ENCODE measurements at regions of chr1 and their contacts with region 1.

Region 1: GRCh38 chr1:40315239-40315794 is 1.8 kb downstream of the COL9A2 start:
- DNase-seq: peak; percentile 71 to 92 (median 85)
- ATAC-seq: peak; percentile 81
- H3K4me3 ChIP-seq: peak overlapping the region; percentile 54 to 84
- H3K4me3 Mint-ChIP-seq: peak overlapping the region; percentile 84
- H3K27ac ChIP-seq: peak overlapping the region in 1 of 2 experiments; percentile 24
- H3K27ac Mint-ChIP-seq: peak overlapping the region; percentile 29
- H3K4me1 ChIP-seq: peaks cover 14% of the 10 kb centered on the region
- H3K4me1 Mint-ChIP-seq: peaks cover 27% of the 10 kb centered on the region
- H3K27me3 ChIP-seq: peaks cover 0 to 13% of the 10 kb centered on the region in 2 experiments
- H3K27me3 Mint-ChIP-seq: peaks cover 7% of the 10 kb centered on the region
- CTCF ChIP-seq: peak; percentile 95

Region 2: DNA sequence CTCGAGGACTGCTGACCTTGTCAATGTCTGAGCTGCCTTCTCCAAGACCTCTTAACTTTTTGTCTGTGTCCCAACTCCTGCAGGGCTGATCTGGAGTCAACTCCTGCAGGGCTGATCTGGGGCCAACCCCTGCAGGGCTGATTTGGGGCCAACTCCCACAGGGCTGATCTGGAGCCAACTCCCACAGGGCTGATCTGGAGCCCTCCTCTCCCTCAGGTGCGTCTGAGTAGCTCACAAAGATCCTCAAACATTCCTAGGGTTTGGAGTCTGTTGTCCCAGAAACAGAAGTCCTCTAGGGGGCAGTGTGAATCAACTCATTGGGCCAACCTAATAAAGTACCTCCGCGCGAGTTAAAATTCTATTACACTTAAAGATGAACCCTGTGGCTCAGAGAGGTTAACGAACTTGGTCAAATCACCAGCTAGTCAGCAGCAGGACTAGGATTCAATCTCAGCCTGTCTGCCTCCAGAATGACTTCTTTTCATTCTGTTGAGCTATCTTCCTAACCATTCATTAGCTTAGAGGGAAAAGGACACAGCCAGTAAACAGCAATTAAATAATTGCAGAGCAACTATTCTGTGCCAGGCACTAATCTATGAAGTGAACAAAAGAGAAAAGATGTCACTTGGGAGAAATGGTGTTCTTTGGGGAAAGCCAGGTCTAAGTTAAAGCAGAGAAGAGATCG is 171.3 kb before region 1 on chr1:
- CTCF ChIA-PET with region 1: interaction called, 12 read pairs
- POLR2A ChIA-PET with region 1: no interaction called
- intact Hi-C with region 1: no loop called
- DNase-seq: peak; percentile 10 to 82 (median 51)
- ATAC-seq: peak; percentile 74
- H3K4me3 ChIP-seq: no peak overlapping the region
- H3K4me3 Mint-ChIP-seq: no peak overlapping the region
- H3K27ac ChIP-seq: no peak overlapping the region
- H3K27ac Mint-ChIP-seq: no peak overlapping the region
- H3K4me1 ChIP-seq: peaks cover 3% of the 10 kb centered on the region
- H3K4me1 Mint-ChIP-seq: peaks cover 6% of the 10 kb centered on the region
- H3K27me3 ChIP-seq: no peaks in the 10 kb centered on the region
- H3K27me3 Mint-ChIP-seq: peaks cover 20% of the 10 kb centered on the region
- CTCF ChIP-seq: peak; percentile 73

Region 3: DNA sequence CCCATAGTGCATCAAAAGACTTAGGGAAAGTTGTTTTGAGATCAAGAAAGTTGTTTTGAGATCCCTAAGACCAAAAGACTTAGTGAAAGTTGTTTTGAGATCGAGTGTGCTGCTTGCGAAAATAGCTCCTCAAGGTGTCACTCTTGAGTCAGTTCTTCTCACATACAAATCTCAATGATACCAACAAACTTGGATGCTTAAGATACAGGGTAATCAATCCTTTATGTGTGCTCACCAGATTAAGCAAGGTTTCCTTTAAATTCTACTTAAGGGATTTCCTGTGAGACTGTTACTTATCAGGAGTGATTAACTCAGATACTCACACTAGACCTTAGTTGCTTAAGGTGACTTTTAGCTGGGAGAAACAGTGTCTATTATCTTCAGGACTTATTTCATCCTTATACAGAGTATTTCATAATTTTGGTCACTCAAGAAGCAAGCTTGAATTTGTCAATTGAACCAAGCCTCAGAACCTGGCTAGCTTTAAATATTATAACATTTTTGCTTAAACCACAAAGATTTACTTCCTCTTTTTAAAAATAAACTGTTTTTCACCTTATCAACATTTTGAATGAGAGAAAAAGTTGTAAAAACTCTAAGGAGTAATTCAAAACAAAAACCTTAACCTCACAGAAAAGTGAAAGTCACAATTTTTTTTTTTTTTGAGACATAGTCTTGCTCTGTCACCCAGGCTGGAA is 162.1 kb before region 1 on chr1:
- CTCF ChIA-PET with region 1: interaction called, 60 read pairs
- POLR2A ChIA-PET with region 1: interaction called, 9 read pairs
- intact Hi-C with region 1: no loop called
- DNase-seq: peak in 5 of 9 experiments; percentile 5 to 84 (median 37)
- ATAC-seq: peak; percentile 88
- H3K4me3 ChIP-seq: no peak overlapping the region
- H3K4me3 Mint-ChIP-seq: peak overlapping the region; percentile 20
- H3K27ac ChIP-seq: no peak overlapping the region
- H3K27ac Mint-ChIP-seq: peak overlapping the region; percentile 65
- H3K4me1 ChIP-seq: no peaks in the 10 kb centered on the region
- H3K4me1 Mint-ChIP-seq: peaks cover 9% of the 10 kb centered on the region
- H3K27me3 ChIP-seq: no peaks in the 10 kb centered on the region
- H3K27me3 Mint-ChIP-seq: no peaks in the 10 kb centered on the region
- CTCF ChIP-seq: peak; percentile 76

Region 4: DNA sequence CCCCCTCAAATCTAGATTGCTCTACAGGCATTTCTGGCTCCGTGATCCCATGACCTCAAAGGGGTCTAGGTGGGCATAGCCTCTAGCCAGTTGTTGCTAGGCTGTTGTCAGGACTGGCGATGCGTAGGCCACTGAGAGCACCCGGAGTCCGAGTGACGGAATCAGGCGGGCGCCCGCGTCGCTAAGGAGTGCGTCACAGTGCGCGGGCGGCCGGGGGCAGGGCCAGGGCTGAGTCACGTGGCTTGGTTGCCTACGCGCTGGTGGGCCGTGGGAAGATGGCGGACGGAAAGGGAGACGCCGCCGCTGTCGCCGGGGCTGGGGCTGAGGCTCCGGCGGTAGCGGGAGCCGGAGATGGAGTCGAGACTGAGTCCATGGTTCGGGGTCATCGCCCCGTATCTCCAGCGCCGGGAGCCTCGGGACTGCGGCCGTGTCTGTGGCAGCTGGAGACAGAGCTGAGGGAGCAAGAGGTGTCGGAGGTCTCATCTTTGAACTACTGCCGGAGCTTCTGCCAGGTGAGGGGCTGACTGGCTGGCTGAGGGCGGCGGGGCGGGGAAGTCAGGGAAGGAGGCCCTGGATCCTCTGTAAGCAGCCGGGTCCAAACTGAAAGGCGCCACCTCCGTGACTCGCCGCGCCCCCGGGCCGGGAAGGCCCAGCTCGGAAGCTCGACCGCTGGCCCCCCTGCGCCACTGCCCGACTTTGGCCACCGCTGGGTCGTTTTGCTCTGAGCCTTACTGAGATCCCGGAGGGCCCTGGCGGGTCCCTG is 154.0 kb before region 1 on chr1 and contains the start of gene RLF:
- CTCF ChIA-PET with region 1: no interaction called
- POLR2A ChIA-PET with region 1: interaction called, 4 read pairs
- intact Hi-C with region 1: loop called (anchors 1 to 5 kb)
- DNase-seq: peak; percentile 90 to 97 (median 94)
- ATAC-seq: peak; percentile 95
- H3K4me3 ChIP-seq: peak within 1 kb of the TSS; percentile 96 to 100
- H3K4me3 Mint-ChIP-seq: no peak within 1 kb of the TSS
- H3K27ac ChIP-seq: peak within 1 kb of the TSS; percentile 96 to 98
- H3K27ac Mint-ChIP-seq: no peak within 1 kb of the TSS
- H3K4me1 ChIP-seq: peaks cover 46% of the 10 kb centered on the region
- H3K4me1 Mint-ChIP-seq: peaks cover 22% of the 10 kb centered on the region
- H3K27me3 ChIP-seq: no peaks in the 10 kb centered on the region
- H3K27me3 Mint-ChIP-seq: no peaks in the 10 kb centered on the region
- CTCF ChIP-seq: no peak
- total RNA-seq, gene RLF: 62.2 to 62.6 TPM

Region 5: GRCh38 chr1:40257688-40258444 is 57.5 kb before region 1 on chr1 and contains the start of gene ZMPSTE24:
- CTCF ChIA-PET with region 1: interaction called, 3 read pairs
- POLR2A ChIA-PET with region 1: interaction called, 3 read pairs
- intact Hi-C with region 1: loop called (anchors 1 to 2 kb)
- DNase-seq: peak; percentile 92 to 99 (median 95)
- ATAC-seq: peak; percentile 95
- H3K4me3 ChIP-seq: peak within 1 kb of the TSS; percentile 95 to 98
- H3K4me3 Mint-ChIP-seq: peak within 1 kb of the TSS; percentile 98
- H3K27ac ChIP-seq: peak within 1 kb of the TSS; percentile 88 to 99
- H3K27ac Mint-ChIP-seq: peak within 1 kb of the TSS; percentile 100
- H3K4me1 ChIP-seq: peaks cover 20% of the 10 kb centered on the region
- H3K4me1 Mint-ChIP-seq: peaks cover 56% of the 10 kb centered on the region
- H3K27me3 ChIP-seq: no peaks in the 10 kb centered on the region
- H3K27me3 Mint-ChIP-seq: no peaks in the 10 kb centered on the region
- CTCF ChIP-seq: no peak
- total RNA-seq, gene ZMPSTE24: 11.5 to 12.2 TPM

Region 6: GRCh38 chr1:40273547-40274166 is 41.7 kb before region 1 on chr1:
- CTCF ChIA-PET with region 1: interaction called, 10 read pairs
- POLR2A ChIA-PET with region 1: no interaction called
- intact Hi-C with region 1: no loop called
- DNase-seq: no peak
- ATAC-seq: no peak
- H3K4me3 ChIP-seq: no peak overlapping the region
- H3K4me3 Mint-ChIP-seq: no peak overlapping the region
- H3K27ac ChIP-seq: no peak overlapping the region
- H3K27ac Mint-ChIP-seq: no peak overlapping the region
- H3K4me1 ChIP-seq: no peaks in the 10 kb centered on the region
- H3K4me1 Mint-ChIP-seq: no peaks in the 10 kb centered on the region
- H3K27me3 ChIP-seq: no peaks in the 10 kb centered on the region
- H3K27me3 Mint-ChIP-seq: no peaks in the 10 kb centered on the region
- CTCF ChIP-seq: no peak

Region 7: DNA sequence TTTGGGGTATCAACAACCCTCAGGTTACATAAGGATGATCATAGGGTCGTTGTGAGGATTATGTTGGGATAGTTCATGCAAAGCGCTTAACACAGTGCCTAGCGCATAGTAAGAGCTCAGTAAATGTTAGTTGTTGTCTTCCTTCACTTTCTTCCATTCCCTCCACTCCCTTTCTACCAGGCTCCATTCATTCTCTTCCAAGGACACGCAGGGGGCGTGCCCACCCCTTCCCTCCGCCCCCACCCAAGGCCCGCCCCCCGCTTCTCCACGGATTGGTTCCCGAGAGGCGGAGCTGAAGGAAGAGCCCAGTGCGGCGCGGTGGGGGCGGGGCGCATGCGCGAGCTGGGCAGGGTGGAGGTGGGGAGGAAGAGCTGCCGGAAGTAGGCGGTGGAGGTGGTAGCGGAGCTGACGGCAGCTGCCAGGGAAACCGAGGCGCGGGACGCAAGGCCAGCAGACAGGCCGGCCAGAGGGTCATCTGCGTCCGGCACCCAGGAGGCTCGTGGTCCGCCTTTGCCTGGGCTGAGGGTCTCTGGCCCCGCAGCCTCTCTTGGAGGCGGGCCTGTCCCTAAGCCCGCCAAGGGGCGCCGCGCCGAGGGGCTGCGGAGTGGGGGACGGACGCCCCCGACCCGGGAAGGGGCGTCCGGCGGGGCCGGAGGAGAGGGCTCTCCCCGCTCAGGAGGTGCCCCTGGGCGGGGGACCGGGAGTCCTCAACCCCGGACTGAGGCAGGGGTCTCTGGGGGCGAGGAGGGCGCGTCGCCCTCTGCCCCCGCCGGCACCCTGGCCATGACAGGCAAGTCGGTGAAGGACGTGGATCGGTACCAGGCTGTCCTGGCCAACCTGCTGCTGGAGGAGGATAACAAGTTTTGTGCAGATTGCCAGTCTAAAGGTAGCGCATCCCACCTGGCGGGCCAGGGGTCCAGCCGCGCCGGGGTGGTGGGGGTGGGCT is 58.3 kb after region 1 on chr1 and contains the start of gene SMAP2:
- CTCF ChIA-PET with region 1: interaction called, 4 read pairs
- POLR2A ChIA-PET with region 1: interaction called, 12 read pairs
- intact Hi-C with region 1: loop called in 1 of 2 experiments (anchors 5 kb)
- DNase-seq: peak; percentile 91 to 98 (median 95)
- ATAC-seq: peak; percentile 80
- H3K4me3 ChIP-seq: peak within 1 kb of the TSS; percentile 81 to 100
- H3K4me3 Mint-ChIP-seq: peak within 1 kb of the TSS; percentile 100
- H3K27ac ChIP-seq: peak within 1 kb of the TSS; percentile 96 to 97
- H3K27ac Mint-ChIP-seq: peak within 1 kb of the TSS; percentile 99
- H3K4me1 ChIP-seq: peaks cover 35% of the 10 kb centered on the region
- H3K4me1 Mint-ChIP-seq: peaks cover 54% of the 10 kb centered on the region
- H3K27me3 ChIP-seq: no peaks in the 10 kb centered on the region
- H3K27me3 Mint-ChIP-seq: no peaks in the 10 kb centered on the region
- CTCF ChIP-seq: no peak
- total RNA-seq, gene SMAP2: 167 to 171 TPM